ENCODE measurements at regions of chr18 and their contacts with region 1.

Region 1: GRCh38 chr18:51278045-51278649 is 80.7 kb upstream of the MEX3C start:
- DNase-seq: peak; percentile 35 to 37
- H3K4me3 ChIP-seq: no peak overlapping the region
- H3K4me3 Mint-ChIP-seq: no peak overlapping the region
- H3K27ac Mint-ChIP-seq: peak overlapping the region; percentile 61
- H3K4me1 ChIP-seq: peaks cover 24% of the 10 kb centered on the region
- H3K4me1 Mint-ChIP-seq: peaks cover 15% of the 10 kb centered on the region
- H3K27me3 ChIP-seq: no peaks in the 10 kb centered on the region
- H3K27me3 Mint-ChIP-seq: no peaks in the 10 kb centered on the region
- CTCF ChIP-seq: peak in 1 of 2 experiments; percentile 29

Region 2: GRCh38 chr18:51197661-51198424 is 80.3 kb before region 1 on chr18 and contains the start of gene MEX3C:
- CTCF ChIA-PET with region 1: no interaction called
- POLR2A ChIA-PET with region 1: interaction called, 3 read pairs
- intact Hi-C with region 1: loop called (anchors 1 kb)
- DNase-seq: peak; percentile 94 to 96
- H3K4me3 ChIP-seq: peak within 1 kb of the TSS; percentile 57
- H3K4me3 Mint-ChIP-seq: peak within 1 kb of the TSS; percentile 89
- H3K27ac Mint-ChIP-seq: peak within 1 kb of the TSS; percentile 97
- H3K4me1 ChIP-seq: no peaks in the 10 kb centered on the region
- H3K4me1 Mint-ChIP-seq: peaks cover 7% of the 10 kb centered on the region
- H3K27me3 ChIP-seq: no peaks in the 10 kb centered on the region
- H3K27me3 Mint-ChIP-seq: no peaks in the 10 kb centered on the region
- CTCF ChIP-seq: peak in 1 of 2 experiments; percentile 10
- total RNA-seq, gene MEX3C: 44.8 and 47.0 TPM in 2 replicates

Region 3: GRCh38 chr18:51235011-51235789 is 42.9 kb before region 1 on chr18:
- CTCF ChIA-PET with region 1: no interaction called
- POLR2A ChIA-PET with region 1: no interaction called
- intact Hi-C with region 1: loop called (anchors 5 kb)
- DNase-seq: no peak
- H3K4me3 ChIP-seq: no peak overlapping the region
- H3K4me3 Mint-ChIP-seq: no peak overlapping the region
- H3K27ac Mint-ChIP-seq: peak overlapping the region; percentile 68
- H3K4me1 ChIP-seq: peaks cover 18% of the 10 kb centered on the region
- H3K4me1 Mint-ChIP-seq: peaks cover 18% of the 10 kb centered on the region
- H3K27me3 ChIP-seq: no peaks in the 10 kb centered on the region
- H3K27me3 Mint-ChIP-seq: no peaks in the 10 kb centered on the region
- CTCF ChIP-seq: no peak

Region 4: DNA sequence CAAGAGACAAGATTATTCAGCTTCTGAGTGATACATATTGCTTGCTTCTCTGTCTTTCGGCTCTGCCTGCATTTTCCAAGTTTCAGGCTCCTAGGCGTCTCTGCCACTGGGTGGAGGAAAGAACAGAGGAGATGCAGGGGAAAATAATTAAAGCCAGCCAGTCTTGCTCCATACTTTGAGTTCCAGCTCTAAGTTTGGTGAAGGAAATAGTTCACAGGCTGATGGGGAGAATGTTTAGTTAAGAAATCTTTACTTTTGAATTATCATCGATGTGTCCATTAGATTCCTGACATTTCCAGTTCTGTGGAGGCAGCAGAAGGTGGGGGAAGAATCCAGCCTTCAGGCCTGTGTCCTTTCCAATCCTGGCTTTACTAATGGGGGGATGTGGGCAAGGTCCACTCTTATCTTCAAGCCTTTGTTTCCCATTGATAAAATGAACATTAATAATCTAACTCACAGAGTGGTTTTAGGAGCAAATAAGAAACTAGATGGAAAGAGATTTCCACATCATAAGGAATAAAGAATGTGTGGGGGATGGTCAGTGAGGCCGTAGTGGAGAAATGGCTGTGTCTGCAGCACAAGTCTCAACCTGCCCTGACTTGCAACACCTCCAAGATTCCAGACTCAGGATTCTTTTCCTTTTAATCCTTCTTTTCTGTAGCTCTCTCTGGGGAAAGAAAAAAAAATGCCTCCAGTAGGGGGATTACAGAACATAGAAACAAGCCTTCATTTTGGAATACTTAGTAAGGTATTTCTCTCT is 43.4 kb after region 1 on chr18:
- CTCF ChIA-PET with region 1: interaction called, 3 read pairs
- POLR2A ChIA-PET with region 1: no interaction called
- intact Hi-C with region 1: loop called (anchors 1 kb)
- DNase-seq: peak; percentile 68 to 74
- H3K4me3 ChIP-seq: no peak overlapping the region
- H3K4me3 Mint-ChIP-seq: no peak overlapping the region
- H3K27ac Mint-ChIP-seq: peak overlapping the region; percentile 72
- H3K4me1 ChIP-seq: peaks cover 25% of the 10 kb centered on the region
- H3K4me1 Mint-ChIP-seq: peaks cover 14% of the 10 kb centered on the region
- H3K27me3 ChIP-seq: no peaks in the 10 kb centered on the region
- H3K27me3 Mint-ChIP-seq: no peaks in the 10 kb centered on the region
- CTCF ChIP-seq: no peak

Region 5: DNA sequence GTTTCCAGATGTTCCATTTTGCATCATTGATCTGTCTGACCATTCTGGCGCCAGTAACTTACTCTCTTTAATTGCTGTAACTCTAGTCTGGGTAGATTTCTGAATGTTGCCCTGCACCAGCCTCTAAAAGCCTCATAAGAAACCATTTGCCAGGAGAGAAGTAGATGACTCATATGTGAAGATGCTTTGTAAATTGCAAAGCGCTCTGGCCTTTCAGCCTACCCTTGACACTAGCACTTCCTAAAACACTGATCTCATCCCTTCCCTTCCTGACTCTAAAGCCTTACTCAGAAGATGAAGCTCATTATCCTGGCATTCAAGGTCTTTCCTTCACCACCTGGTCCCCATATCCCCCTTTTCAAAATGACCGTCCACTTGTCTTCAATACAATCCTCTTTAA is 112.6 kb after region 1 on chr18:
- CTCF ChIA-PET with region 1: no interaction called
- POLR2A ChIA-PET with region 1: no interaction called
- intact Hi-C with region 1: loop called (anchors 5 kb)
- DNase-seq: no peak
- H3K4me3 ChIP-seq: no peak overlapping the region
- H3K4me3 Mint-ChIP-seq: no peak overlapping the region
- H3K27ac Mint-ChIP-seq: no peak overlapping the region
- H3K4me1 ChIP-seq: no peaks in the 10 kb centered on the region
- H3K4me1 Mint-ChIP-seq: peaks cover 7% of the 10 kb centered on the region
- H3K27me3 ChIP-seq: no peaks in the 10 kb centered on the region
- H3K27me3 Mint-ChIP-seq: no peaks in the 10 kb centered on the region
- CTCF ChIP-seq: no peak

Region 6: DNA sequence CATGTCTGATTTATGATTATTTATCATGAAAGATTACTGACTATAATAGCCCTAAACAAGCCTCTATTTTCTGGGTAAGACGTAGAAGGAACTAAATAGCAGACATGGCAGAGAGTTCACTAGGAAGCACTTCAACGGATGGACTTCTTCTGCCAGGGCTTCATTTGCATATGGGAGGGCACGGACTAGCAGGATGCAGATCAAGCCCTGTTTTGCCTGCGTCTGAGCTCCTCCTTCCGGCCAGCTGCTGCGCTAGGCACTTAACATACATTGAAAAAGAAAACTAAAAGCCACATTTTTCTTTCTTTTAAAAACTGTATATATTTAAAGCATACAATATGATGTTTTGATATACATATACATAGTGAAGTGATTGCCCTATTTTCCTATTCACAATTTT is 259.3 kb after region 1 on chr18:
- CTCF ChIA-PET with region 1: no interaction called
- POLR2A ChIA-PET with region 1: no interaction called
- intact Hi-C with region 1: loop called (anchors 2 kb)
- DNase-seq: peak; percentile 24 to 42
- H3K4me3 ChIP-seq: no peak overlapping the region
- H3K4me3 Mint-ChIP-seq: no peak overlapping the region
- H3K27ac Mint-ChIP-seq: no peak overlapping the region
- H3K4me1 ChIP-seq: no peaks in the 10 kb centered on the region
- H3K4me1 Mint-ChIP-seq: no peaks in the 10 kb centered on the region
- H3K27me3 ChIP-seq: no peaks in the 10 kb centered on the region
- H3K27me3 Mint-ChIP-seq: no peaks in the 10 kb centered on the region
- CTCF ChIP-seq: peak in 1 of 2 experiments; percentile 60

Measured in Caco-2 (cell line).